Caco-2 (cell line): ENCODE measurements at regions of chr20 and their contacts with region 1.

Region 1: GRCh38 chr20:56636716-56637115 is 7.6 kb downstream of the TFAP2C start:
- DNase-seq: no peak
- H3K4me3 ChIP-seq: no peak overlapping the region
- H3K4me3 Mint-ChIP-seq: no peak overlapping the region
- H3K27ac Mint-ChIP-seq: no peak overlapping the region
- H3K4me1 ChIP-seq: no peaks in the 10 kb centered on the region; the same call in 1 of the 2 replicates
- H3K4me1 Mint-ChIP-seq: peaks cover 6% of the 10 kb centered on the region
- H3K27me3 ChIP-seq: no peaks in the 10 kb centered on the region
- H3K27me3 Mint-ChIP-seq: no peaks in the 10 kb centered on the region
- CTCF ChIP-seq: no peak

Region 2: GRCh38 chr20:56653221-56653620 is 16.5 kb after region 1 on chr20:
- CTCF ChIA-PET with region 1: no interaction called
- POLR2A ChIA-PET with region 1: interaction called, 10 read pairs
- intact Hi-C with region 1: no loop called
- DNase-seq: no peak
- H3K4me3 ChIP-seq: no peak overlapping the region
- H3K4me3 Mint-ChIP-seq: no peak overlapping the region
- H3K27ac Mint-ChIP-seq: no peak overlapping the region
- H3K4me1 ChIP-seq: no peaks in the 10 kb centered on the region
- H3K4me1 Mint-ChIP-seq: no peaks in the 10 kb centered on the region
- H3K27me3 ChIP-seq: no peaks in the 10 kb centered on the region
- H3K27me3 Mint-ChIP-seq: peaks cover 4% of the 10 kb centered on the region
- CTCF ChIP-seq: no peak